Activated CD4-positive, alpha-beta T cell treated with anti-CD3 and anti-CD28 coated beads for 36 hours (primary cell): ENCODE measurements at regions of chr6 and their contacts with region 1.

Region 1: GRCh38 chr6:130020907-130021629 is 2.7 kb downstream of the L3MBTL3 start:
- DNase-seq: peak; percentile 85
- ATAC-seq: peak; percentile 59
- H3K4me3 Mint-ChIP-seq: peak overlapping the region; percentile 91
- H3K27ac Mint-ChIP-seq: peak overlapping the region; percentile 90
- H3K4me1 Mint-ChIP-seq: peaks cover 38% of the 10 kb centered on the region
- H3K27me3 Mint-ChIP-seq: no peaks in the 10 kb centered on the region

Region 2: GRCh38 chr6:129672881-129673643 is 348.0 kb before region 1 on chr6:
- CTCF ChIA-PET with region 1: no interaction called
- POLR2A ChIA-PET with region 1: no interaction called
- intact Hi-C with region 1: loop called (anchors 2 kb)
- DNase-seq: peak; percentile 24
- ATAC-seq: peak; percentile 69
- H3K4me3 Mint-ChIP-seq: peak overlapping the region; percentile 59
- H3K27ac Mint-ChIP-seq: peak overlapping the region; percentile 92
- H3K4me1 Mint-ChIP-seq: peaks cover 38% of the 10 kb centered on the region
- H3K27me3 Mint-ChIP-seq: peaks cover 2% of the 10 kb centered on the region

Region 3: GRCh38 chr6:129766959-129767728 is 253.9 kb before region 1 on chr6:
- CTCF ChIA-PET with region 1: interaction called, 3 read pairs
- POLR2A ChIA-PET with region 1: no interaction called
- intact Hi-C with region 1: loop called in 1 of 2 experiments (anchors 5 kb)
- DNase-seq: peak; percentile 82
- ATAC-seq: peak; percentile 97
- H3K4me3 Mint-ChIP-seq: peak overlapping the region; percentile 62
- H3K27ac Mint-ChIP-seq: no peak overlapping the region
- H3K4me1 Mint-ChIP-seq: peaks cover 12% of the 10 kb centered on the region
- H3K27me3 Mint-ChIP-seq: peaks cover 38% of the 10 kb centered on the region

Region 4: GRCh38 chr6:129936329-129937165 is 84.5 kb before region 1 on chr6:
- CTCF ChIA-PET with region 1: no interaction called
- POLR2A ChIA-PET with region 1: no interaction called
- intact Hi-C with region 1: loop called (anchors 1 to 5 kb)
- DNase-seq: peak; percentile 59
- ATAC-seq: no peak
- H3K4me3 Mint-ChIP-seq: no peak overlapping the region
- H3K27ac Mint-ChIP-seq: no peak overlapping the region
- H3K4me1 Mint-ChIP-seq: no peaks in the 10 kb centered on the region
- H3K27me3 Mint-ChIP-seq: peaks cover 9% of the 10 kb centered on the region

Region 5: GRCh38 chr6:130037207-130037811 is 16.2 kb after region 1 on chr6:
- CTCF ChIA-PET with region 1: interaction called, 15 read pairs
- POLR2A ChIA-PET with region 1: interaction called, 8 read pairs
- intact Hi-C with region 1: no loop called
- DNase-seq: no peak
- ATAC-seq: no peak
- H3K4me3 Mint-ChIP-seq: no peak overlapping the region
- H3K27ac Mint-ChIP-seq: no peak overlapping the region
- H3K4me1 Mint-ChIP-seq: peaks cover 41% of the 10 kb centered on the region
- H3K27me3 Mint-ChIP-seq: no peaks in the 10 kb centered on the region